ENCODE measurements at regions of chr19 and their contacts with region 1.

Region 1: DNA sequence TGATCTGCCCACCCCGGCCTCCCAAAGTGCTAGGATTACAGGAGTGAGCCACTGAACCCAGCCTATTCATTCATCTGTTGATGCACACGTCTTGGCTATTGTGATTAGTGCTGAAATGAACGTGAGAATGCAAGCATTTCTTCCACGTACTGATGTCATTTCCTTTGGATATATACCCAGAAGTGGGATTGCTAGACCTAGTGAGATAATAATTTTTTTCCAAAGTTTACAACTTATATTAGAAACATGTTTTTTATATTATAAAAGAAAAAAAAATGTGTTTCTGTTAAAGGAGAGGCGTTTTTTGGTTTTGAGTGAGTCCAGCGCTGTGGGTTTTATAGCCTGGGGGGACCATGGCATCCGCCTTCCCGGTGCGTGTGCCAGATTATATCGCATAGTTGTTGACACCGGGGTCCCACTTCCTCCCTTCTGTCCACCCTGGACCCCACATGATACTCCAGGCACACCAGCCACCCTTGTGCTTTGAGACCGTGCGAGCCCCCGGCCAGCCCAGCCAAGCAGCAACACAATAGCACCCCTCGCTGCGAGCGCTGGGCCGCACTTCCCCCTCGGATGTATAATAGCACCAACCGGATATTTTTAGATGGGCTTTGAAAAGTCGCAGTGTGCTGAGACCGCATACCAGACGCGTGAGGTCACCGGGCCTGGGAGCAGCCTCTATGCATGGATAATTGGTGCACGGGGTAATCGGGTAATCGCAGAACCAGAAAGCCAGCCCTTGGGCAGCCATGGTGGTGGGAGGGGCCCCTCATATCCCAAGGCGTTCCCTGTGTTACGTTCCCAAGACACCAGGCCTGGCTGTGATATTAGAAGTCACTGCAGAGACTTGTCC is 59.6 kb downstream of the MYO9B start:
- DNase-seq: peak; percentile 59
- ATAC-seq: peak; percentile 94
- H3K4me3 ChIP-seq: peak overlapping the region; percentile 21 to 42
- H3K27ac ChIP-seq: peak overlapping the region; percentile 74
- H3K4me1 ChIP-seq: peaks cover 9% of the 10 kb centered on the region
- H3K27me3 ChIP-seq: no peaks in the 10 kb centered on the region
- CTCF ChIP-seq: no peak

Region 2: DNA sequence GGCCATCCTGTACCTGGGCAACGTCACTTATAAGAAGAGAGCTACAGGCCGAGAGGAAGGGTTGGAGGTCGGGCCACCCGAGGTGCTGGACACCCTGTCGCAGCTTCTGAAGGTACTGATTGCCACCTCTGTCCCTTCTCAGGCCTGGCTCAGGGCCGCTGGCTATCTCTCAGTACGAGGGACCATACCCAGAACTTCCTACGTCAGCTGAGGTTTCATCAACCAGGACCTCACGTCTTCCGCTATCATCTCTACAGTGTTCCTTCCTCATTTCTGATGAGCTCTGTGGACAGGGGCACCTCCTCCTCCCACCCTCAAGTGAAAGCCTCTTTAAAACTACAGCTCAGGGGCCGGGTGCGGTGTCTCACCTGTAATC is 21.7 kb after region 1 on chr19:
- CTCF ChIA-PET with region 1: no interaction called
- POLR2A ChIA-PET with region 1: no interaction called
- in situ Hi-C with region 1: no loop called
- intact Hi-C with region 1: no loop called
- DNase-seq: no peak
- ATAC-seq: no peak
- H3K4me3 ChIP-seq: no peak overlapping the region
- H3K27ac ChIP-seq: no peak overlapping the region
- H3K4me1 ChIP-seq: no peaks in the 10 kb centered on the region
- H3K27me3 ChIP-seq: no peaks in the 10 kb centered on the region
- CTCF ChIP-seq: no peak

Region 3: DNA sequence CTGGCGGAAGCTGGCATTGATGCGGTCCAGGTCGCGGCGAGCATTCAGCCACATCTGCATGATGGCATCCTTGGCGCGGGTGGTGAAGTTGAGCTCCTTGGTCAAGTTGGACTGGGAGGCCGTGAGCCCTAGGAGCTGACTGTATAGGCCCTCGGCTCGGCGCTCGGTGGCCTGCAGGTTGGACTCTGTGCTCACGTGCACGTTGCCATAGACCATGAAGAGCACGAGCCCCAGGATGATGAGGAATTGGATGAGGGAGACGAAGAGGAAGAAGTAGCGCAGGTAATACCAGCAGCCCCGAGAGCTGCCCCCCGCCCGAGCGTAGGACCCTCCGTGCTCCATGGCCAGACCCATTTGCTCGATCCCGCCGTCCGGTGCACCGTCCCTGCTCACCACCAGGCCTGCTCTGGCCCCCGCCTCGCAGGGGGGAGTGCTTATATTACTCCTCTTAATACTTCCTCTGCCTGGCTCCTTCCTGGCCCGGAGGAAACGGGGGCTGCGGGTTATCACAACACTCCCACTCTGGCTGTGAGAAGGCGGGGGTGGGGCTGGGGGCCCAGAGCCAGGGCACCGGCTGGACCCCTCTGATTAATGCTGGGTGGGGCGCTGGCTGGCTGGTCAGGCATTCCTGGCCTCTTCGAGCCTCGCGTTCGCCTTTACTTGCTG is 241.8 kb after region 1 on chr19 and contains the start of gene PLVAP:
- CTCF ChIA-PET with region 1: no interaction called
- POLR2A ChIA-PET with region 1: no interaction called
- in situ Hi-C with region 1: no loop called
- intact Hi-C with region 1: no loop called
- DNase-seq: no peak
- ATAC-seq: no peak
- H3K4me3 ChIP-seq: no peak within 1 kb of the TSS
- H3K27ac ChIP-seq: no peak within 1 kb of the TSS
- H3K4me1 ChIP-seq: no peaks in the 10 kb centered on the region
- H3K27me3 ChIP-seq: no peaks in the 10 kb centered on the region
- CTCF ChIP-seq: no peak
- total RNA-seq, gene PLVAP: 0.08 TPM

Region 4: GRCh38 chr19:18221815-18222725 is 1086.8 kb after region 1 on chr19:
- CTCF ChIA-PET with region 1: no interaction called
- POLR2A ChIA-PET with region 1: interaction called, 10 read pairs
- in situ Hi-C with region 1: no loop called
- intact Hi-C with region 1: no loop called
- DNase-seq: no peak
- ATAC-seq: no peak
- H3K4me3 ChIP-seq: no peak overlapping the region
- H3K27ac ChIP-seq: no peak overlapping the region
- H3K4me1 ChIP-seq: no peaks in the 10 kb centered on the region; the same call in 1 of the 2 replicates
- H3K27me3 ChIP-seq: no peaks in the 10 kb centered on the region
- CTCF ChIP-seq: no peak

Measured in Panc1 (cell line).